Activated naive CD4-positive, alpha-beta T cell treated with anti-CD3 and anti-CD28 coated beads for 36 hours (primary cell): ENCODE measurements at regions of chr3 and their contacts with region 1.

Region 1: DNA sequence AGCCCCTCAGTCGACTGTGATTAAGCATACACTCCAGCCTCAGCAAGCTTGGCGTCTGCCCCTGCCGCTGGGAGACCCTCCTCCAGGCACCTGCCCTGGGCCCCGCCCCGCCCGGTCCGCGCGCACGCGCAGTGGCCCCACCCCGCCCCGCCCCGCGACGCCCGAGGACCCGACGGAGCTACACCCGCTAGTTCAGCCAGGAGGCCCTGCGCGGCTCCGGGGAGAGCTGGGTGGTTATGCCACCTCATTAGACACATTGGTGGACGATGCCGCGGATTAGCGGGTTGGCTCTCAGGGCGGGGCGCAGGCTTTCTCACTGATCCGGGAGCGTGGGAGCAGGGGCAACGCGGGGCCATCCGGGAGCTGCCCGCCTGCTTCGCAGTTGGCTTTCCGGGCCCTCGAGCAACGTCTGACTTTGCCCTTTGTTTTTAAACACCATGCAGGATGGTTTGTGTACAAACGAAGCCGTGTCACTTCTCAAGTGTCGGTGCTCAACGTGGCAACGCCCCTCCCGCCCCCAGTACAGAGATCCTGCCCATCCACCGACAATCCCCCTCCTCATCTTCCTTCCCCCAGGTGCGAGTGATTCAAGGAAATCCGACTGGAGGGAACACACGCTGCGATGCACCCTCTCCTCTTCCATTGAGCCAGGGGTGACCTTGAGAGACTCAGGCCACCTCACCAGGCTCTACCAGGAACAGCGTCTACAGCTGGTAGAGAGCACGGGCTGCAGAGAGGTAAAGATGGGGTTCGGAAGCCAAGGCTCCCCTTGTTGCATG is 109.3 kb downstream of the SHQ1 start:
- DNase-seq: peak; percentile 85
- H3K4me3 Mint-ChIP-seq: peak overlapping the region; percentile 83
- H3K27ac Mint-ChIP-seq: peak overlapping the region; percentile 51
- H3K4me1 Mint-ChIP-seq: peaks cover 21% of the 10 kb centered on the region
- H3K27me3 Mint-ChIP-seq: no peaks in the 10 kb centered on the region

Region 2: DNA sequence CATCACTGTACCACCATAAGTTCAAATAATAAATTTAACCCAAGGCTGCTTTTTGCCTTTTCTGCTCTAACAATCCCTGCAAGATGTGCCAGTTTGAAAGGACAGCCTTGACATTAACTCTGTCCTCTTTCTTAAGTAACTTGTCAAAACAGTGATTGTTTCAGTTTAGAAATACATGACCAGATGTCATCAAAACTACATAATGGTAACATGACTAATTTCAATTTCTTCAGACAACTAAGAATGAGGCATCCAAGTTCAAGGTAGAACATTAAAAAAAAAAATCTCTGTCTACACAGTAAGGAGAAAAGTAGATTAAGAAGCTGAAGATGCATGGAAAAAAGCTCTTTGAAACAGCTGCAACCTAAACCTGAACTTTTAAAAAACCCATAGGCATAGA is 61.9 kb after region 1 on chr3:
- CTCF ChIA-PET with region 1: no interaction called
- intact Hi-C with region 1: loop called (anchors 5 kb)
- DNase-seq: no peak
- H3K4me3 Mint-ChIP-seq: no peak overlapping the region
- H3K27ac Mint-ChIP-seq: no peak overlapping the region
- H3K4me1 Mint-ChIP-seq: peaks cover 26% of the 10 kb centered on the region
- H3K27me3 Mint-ChIP-seq: no peaks in the 10 kb centered on the region